ENCODE measurements at regions of chrX and their contacts with region 1.

Region 1: DNA sequence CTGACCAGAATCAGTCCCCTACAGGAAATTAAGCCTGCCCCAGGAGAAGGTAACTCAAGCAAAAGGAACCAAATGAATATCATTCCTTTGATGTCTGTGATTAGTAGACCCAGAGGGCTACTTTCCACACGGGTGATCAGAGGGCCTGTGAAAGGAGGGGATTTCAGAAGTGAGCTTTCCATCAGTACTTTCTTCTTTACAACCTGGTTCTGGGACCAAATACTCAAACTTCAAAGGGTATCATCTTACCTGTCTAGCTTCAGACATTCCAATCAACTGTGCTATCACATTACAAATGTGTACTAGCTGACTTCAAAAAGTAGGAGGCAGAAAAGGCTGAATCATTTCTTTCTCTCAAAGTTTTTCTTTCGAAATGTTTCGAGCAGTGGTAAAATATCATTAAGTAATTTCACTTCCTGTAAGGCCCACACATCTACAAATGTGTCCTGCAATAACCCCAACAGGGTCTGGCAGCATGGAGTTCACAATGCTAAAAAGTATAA is 23.9 kb downstream of the ACSL4 start:
- DNase-seq: no peak
- H3K4me3 ChIP-seq: no peak overlapping the region
- H3K27ac ChIP-seq: peak overlapping the region in 2 of 4 donors; percentile 22 to 49
- H3K4me1 ChIP-seq: peaks cover 0 to 27% (median 2%) of the 10 kb centered on the region in 4 donors
- H3K27me3 ChIP-seq: no peaks in the 10 kb centered on the region
- CTCF ChIP-seq: no peak
- EP300 ChIP-seq: no peak
- POLR2A ChIP-seq: no peak

Region 2: DNA sequence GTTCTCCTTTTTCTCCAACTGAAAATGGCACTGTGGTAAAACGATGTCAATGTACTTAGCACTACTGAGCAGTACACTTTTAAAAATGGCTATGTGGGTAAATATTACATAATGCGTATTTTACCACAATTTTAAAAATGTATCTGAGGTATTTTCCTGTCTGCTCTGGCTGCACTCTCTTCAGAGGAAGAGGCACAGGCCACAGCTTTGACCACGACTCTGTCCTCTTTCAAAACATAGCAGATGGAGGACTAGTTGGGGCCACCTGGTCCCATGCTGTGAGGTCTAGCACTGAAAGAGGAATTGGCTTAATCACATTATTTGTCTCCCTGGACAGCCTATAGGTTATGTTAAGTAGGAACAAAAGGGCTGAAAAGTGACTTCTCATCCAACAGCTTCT is 89.4 kb before region 1 on chrX:
- intact Hi-C with region 1: no loop called
- DNase-seq: no peak
- H3K4me3 ChIP-seq: no peak overlapping the region
- H3K27ac ChIP-seq: no peak overlapping the region
- H3K4me1 ChIP-seq: no peaks in the 10 kb centered on the region
- H3K27me3 ChIP-seq: no peaks in the 10 kb centered on the region
- CTCF ChIP-seq: no peak
- EP300 ChIP-seq: no peak
- POLR2A ChIP-seq: no peak

Region 3: DNA sequence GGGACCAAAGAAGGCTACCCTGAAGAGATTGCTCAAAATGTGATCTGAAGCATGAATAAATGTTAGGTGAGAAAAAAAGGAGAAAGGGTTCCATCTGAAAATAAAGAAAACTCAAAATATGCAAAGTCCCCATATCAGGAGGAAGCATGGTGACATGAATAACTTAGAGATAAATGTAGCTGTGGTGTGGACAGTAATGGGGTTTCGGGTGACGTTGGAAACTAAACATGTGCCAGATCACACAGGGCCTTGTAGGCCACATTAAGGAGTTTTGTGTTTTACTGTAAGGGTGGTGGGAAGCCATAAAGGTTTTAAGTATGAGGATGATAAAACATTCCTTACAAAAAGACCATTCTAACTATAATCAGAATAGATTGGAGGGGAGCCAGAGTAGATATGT is 64.2 kb after region 1 on chrX:
- intact Hi-C with region 1: no loop called
- DNase-seq: no peak
- H3K4me3 ChIP-seq: no peak overlapping the region
- H3K27ac ChIP-seq: no peak overlapping the region
- H3K4me1 ChIP-seq: no peaks in the 10 kb centered on the region
- H3K27me3 ChIP-seq: no peaks in the 10 kb centered on the region
- CTCF ChIP-seq: no peak
- EP300 ChIP-seq: no peak
- POLR2A ChIP-seq: no peak

Region 4: GRCh38 chrX:109856974-109857373 is 147.8 kb after region 1 on chrX:
- intact Hi-C with region 1: loop called (anchors 2 kb)
- DNase-seq: no peak
- H3K4me3 ChIP-seq: no peak overlapping the region
- H3K27ac ChIP-seq: peak overlapping the region in 1 of 4 donors; percentile 15
- H3K4me1 ChIP-seq: no peaks in the 10 kb centered on the region
- H3K27me3 ChIP-seq: no peaks in the 10 kb centered on the region
- CTCF ChIP-seq: peak; percentile 26 to 65 (median 44)
- EP300 ChIP-seq: no peak
- POLR2A ChIP-seq: no peak

Measured in sigmoid colon (tissue), 7 donors.